Right ventricle myocardium inferior (tissue), 1 donor: ENCODE measurements at regions of chr2 and their contacts with region 1.

Region 1: GRCh38 chr2:43226558-43226954 is at the start of gene ZFP36L2:
- DNase-seq: peak; percentile 99
- ATAC-seq: peak; percentile 82
- total RNA-seq, gene ZFP36L2: 51.1 TPM

Region 2: DNA sequence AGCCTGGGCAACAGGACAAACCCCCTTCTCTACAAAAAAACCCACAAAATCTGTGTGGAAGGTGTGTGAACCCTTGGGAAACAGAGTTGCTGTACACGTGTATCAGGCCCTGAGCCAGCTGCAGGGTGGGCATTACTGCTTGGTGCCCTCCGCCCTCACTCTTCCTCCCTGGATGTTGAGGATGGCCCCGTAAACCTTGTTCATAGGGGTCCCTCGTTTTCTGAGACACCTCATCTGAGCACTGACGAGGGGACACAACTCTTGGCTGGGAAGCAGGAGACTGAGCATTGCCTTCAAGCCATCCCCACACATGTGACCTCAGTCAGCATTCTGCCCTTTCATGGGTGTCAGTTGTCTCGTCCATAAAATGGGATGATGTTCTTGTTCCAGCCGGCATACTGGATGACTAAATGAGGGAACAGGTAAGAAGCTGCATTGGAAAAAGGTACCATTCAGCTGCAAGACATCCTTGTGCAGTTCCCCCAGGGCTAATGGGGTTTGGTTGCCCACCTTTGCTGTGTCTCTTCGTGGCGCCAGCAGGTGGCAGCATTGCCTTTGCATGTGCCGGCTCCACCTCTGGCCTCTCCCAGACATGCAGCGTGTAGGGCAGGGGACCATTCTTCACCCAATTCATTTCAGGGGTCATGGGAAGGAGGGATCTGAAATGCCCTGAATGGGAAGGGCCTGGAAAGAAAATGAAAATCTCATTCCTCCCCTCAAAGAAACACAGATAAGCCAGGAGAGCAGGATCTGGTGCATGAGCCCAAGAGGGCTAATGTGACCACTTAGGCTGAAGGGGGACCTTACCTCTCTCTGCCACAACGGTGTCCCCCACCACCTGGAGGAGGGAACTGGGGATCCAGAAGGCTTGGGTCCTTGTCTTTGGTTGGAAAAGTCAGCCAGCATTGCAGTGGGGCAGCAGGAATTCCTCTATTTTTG is 397.8 kb before region 1 on chr2:
- intact Hi-C with region 1: loop called (anchors 2 kb)
- DNase-seq: peak; percentile 91
- ATAC-seq: peak; percentile 92

Region 3: GRCh38 chr2:42944779-42945415 is 281.7 kb before region 1 on chr2:
- intact Hi-C with region 1: loop called (anchors 2 kb)
- DNase-seq: no peak
- ATAC-seq: no peak

Region 4: GRCh38 chr2:43024515-43025011 is 202.0 kb before region 1 on chr2:
- intact Hi-C with region 1: loop called (anchors 2 kb)
- DNase-seq: peak; percentile 81
- ATAC-seq: peak; percentile 47

Region 5: DNA sequence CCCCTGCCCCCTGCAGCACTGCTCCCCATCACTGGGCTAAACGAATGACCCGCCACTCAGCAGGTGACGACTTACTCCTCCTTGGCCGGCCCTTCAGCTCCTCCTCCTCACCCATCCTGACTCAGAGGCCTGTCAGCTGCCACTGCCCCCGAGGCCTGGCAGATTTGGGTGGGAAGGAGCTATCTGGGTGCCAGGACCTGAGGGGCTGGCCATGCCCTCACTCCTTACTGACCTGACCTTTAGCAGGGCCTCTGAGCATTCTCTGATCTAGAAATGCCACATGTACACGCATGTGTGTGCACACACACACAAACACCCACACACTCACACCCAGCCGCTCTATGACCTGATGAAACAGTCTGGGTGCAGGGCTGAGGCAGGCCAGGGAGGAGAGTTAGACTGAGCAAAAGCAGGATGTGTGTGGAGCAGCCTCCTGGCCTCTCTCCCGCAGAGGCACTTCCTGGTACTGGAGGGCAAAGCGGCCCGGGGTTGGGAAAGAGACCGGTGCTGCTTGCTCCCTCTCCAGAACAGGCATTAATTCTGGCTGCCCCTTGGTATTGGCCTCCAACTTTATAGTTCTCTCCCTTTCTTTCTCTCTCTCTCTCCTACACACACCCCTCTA is 68.2 kb before region 1 on chr2:
- intact Hi-C with region 1: loop called (anchors 2 kb)
- DNase-seq: peak; percentile 87
- ATAC-seq: peak; percentile 50